GM23248 (cell line): ENCODE measurements at regions of chr14 and their contacts with region 1.

Region 1: GRCh38 chr14:80850197-80850814 is 91.2 kb downstream of the CEP128 start:
- DNase-seq: peak; percentile 50
- H3K4me3 ChIP-seq: no peak overlapping the region
- H3K27ac ChIP-seq: no peak overlapping the region
- H3K4me1 ChIP-seq: peaks cover 7% of the 10 kb centered on the region; the same call in 1 of the 2 replicates
- H3K27me3 ChIP-seq: no peaks in the 10 kb centered on the region

Region 2: GRCh38 chr14:78959674-78960264 is 1890.5 kb before region 1 on chr14:
- in situ Hi-C with region 1: loop called (anchors 25 kb)
- DNase-seq: peak; percentile 84
- H3K4me3 ChIP-seq: peak overlapping the region; percentile 63
- H3K27ac ChIP-seq: no peak overlapping the region
- H3K4me1 ChIP-seq: no peaks in the 10 kb centered on the region; the same call in 1 of the 2 replicates
- H3K27me3 ChIP-seq: no peaks in the 10 kb centered on the region

Region 3: DNA sequence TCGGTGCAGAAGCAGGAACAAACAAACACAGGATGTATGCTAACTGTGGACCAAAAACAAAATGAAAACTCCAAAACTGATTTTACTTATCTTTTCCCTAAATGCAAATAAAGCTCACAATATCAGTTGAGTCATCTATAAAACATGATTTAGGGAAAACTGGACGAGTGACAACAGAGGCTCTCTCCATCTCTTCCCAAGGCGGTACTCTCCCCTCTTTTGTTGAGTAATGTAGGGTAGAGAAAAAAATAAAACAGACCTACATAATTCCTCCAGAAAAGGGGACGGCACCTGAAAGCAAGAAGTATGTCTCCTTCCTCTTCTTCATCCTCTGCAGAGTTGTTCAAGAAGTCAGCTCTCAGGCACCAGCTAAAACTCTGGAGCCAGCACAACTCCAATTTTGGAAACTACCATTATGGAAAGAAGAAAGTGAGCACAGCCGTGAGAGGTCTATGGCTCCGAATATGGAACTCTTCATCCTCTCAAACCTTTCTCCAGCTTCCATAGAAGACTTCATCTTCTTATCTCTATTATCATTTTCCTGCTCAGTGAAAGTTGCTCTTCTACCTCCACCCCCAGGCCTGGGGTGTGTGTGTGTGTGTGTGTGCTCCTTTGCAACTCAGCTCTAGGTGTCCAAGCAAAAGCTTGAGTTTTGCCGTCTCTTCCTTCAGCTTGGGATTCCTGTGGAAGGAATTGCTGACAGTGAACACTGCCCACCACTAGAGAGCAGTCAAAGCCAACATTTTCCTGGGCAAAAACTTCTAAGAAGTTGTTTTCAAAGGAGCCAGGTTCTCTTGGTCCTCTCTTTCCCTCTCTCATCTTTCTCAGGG is 794.4 kb before region 1 on chr14:
- in situ Hi-C with region 1: loop called (anchors 25 kb)
- DNase-seq: peak; percentile 73
- H3K4me3 ChIP-seq: no peak overlapping the region
- H3K27ac ChIP-seq: no peak overlapping the region
- H3K4me1 ChIP-seq: 0 out of 2 replicates have a peak, but pooled peaks cover 3% of the 10 kb centered on the region
- H3K27me3 ChIP-seq: no peaks in the 10 kb centered on the region

Region 4: GRCh38 chr14:80202888-80203562 is 647.3 kb before region 1 on chr14:
- in situ Hi-C with region 1: loop called (anchors 10 kb)
- DNase-seq: no peak
- H3K4me3 ChIP-seq: no peak overlapping the region
- H3K27ac ChIP-seq: no peak overlapping the region
- H3K4me1 ChIP-seq: no peaks in the 10 kb centered on the region
- H3K27me3 ChIP-seq: no peaks in the 10 kb centered on the region